K562 (cell line): ENCODE measurements at regions of chr10 and their contacts with region 1.

Region 1: GRCh38 chr10:4849555-4850242 is 23.7 kb downstream of the AKR1E2 start:
- DNase-seq: peak; percentile 80 to 96 (median 82)
- ATAC-seq: peak; percentile 87
- H3K4me3 ChIP-seq: no peak overlapping the region
- H3K27ac ChIP-seq: peak overlapping the region; percentile 96
- H3K4me1 ChIP-seq: peaks cover 14 to 34% of the 10 kb centered on the region in 2 experiments
- H3K27me3 ChIP-seq: no peaks in the 10 kb centered on the region
- CTCF ChIP-seq: peak; percentile 100
- EP300 ChIP-seq: peak; percentile 73; the same call in 1 of the 2 replicates
- POLR2A ChIP-seq: no peak; the same call in none of the 2 replicates
- RAD21 ChIP-seq: peak; percentile 99 to 100

Region 2: GRCh38 chr10:4819707-4820106 is 30.0 kb before region 1 on chr10:
- CTCF ChIA-PET with region 1: interaction called, 10 read pairs
- POLR2A ChIA-PET with region 1: no interaction called
- in situ Hi-C with region 1: no loop called
- intact Hi-C with region 1: loop called (anchors 1 kb)
- DNase-seq: peak in 2 of 4 experiments; percentile 38 to 67
- ATAC-seq: peak; percentile 66
- H3K4me3 ChIP-seq: no peak overlapping the region
- H3K27ac ChIP-seq: no peak overlapping the region; the same call in 2 of the 3 replicates
- H3K4me1 ChIP-seq: peaks cover 0 to 32% of the 10 kb centered on the region in 2 experiments; a peak in 2 of 5 replicates
- H3K27me3 ChIP-seq: no peaks in the 10 kb centered on the region
- CTCF ChIP-seq: no peak
- EP300 ChIP-seq: peak; percentile 50
- POLR2A ChIP-seq: no peak
- RAD21 ChIP-seq: no peak; a peak in 1 of 4 replicates

Region 3: GRCh38 chr10:4839401-4839800 is 10.3 kb before region 1 on chr10:
- CTCF ChIA-PET with region 1: no interaction called
- POLR2A ChIA-PET with region 1: interaction called, 22 read pairs
- in situ Hi-C with region 1: no loop called
- intact Hi-C with region 1: no loop called
- DNase-seq: peak in 2 of 4 experiments; percentile 22 to 39
- ATAC-seq: peak; percentile 92
- H3K4me3 ChIP-seq: no peak overlapping the region
- H3K27ac ChIP-seq: no peak overlapping the region
- H3K4me1 ChIP-seq: peaks cover 0 to 2% of the 10 kb centered on the region in 2 experiments; a peak in 1 of 5 replicates
- H3K27me3 ChIP-seq: no peaks in the 10 kb centered on the region
- CTCF ChIP-seq: peak; percentile 29 to 38 (median 36); a peak in 4 of 6 replicates
- EP300 ChIP-seq: no peak
- POLR2A ChIP-seq: no peak
- RAD21 ChIP-seq: peak in 1 of 2 experiments; percentile 36; a peak in 2 of 4 replicates

Region 4: GRCh38 chr10:4981722-4982471 is 132.2 kb after region 1 on chr10:
- CTCF ChIA-PET with region 1: interaction called, 13 read pairs
- POLR2A ChIA-PET with region 1: interaction called, 3 read pairs
- in situ Hi-C with region 1: loop called (anchors 5 kb)
- intact Hi-C with region 1: loop called (anchors 1 kb)
- DNase-seq: peak; percentile 62 to 93 (median 64)
- ATAC-seq: peak; percentile 89
- H3K4me3 ChIP-seq: no peak overlapping the region
- H3K27ac ChIP-seq: peak overlapping the region; percentile 82
- H3K4me1 ChIP-seq: peaks cover 18 to 20% of the 10 kb centered on the region in 2 experiments; a peak in 4 of 5 replicates
- H3K27me3 ChIP-seq: no peaks in the 10 kb centered on the region
- CTCF ChIP-seq: peak; percentile 78 to 79 (median 78)
- EP300 ChIP-seq: peak; percentile 92
- POLR2A ChIP-seq: peak; percentile 63; the same call in 1 of the 2 replicates
- RAD21 ChIP-seq: peak; percentile 58 to 78

Region 5: GRCh38 chr10:5283305-5284158 is 433.8 kb after region 1 on chr10:
- CTCF ChIA-PET with region 1: interaction called, 12 read pairs
- POLR2A ChIA-PET with region 1: no interaction called
- in situ Hi-C with region 1: loop called (anchors 10 kb)
- intact Hi-C with region 1: loop called (anchors 1 kb)
- DNase-seq: peak; percentile 47 to 81 (median 62)
- ATAC-seq: peak; percentile 95
- H3K4me3 ChIP-seq: no peak overlapping the region
- H3K27ac ChIP-seq: peak overlapping the region; percentile 89
- H3K4me1 ChIP-seq: peaks cover 2 to 17% of the 10 kb centered on the region in 2 experiments; a peak in 4 of 5 replicates
- H3K27me3 ChIP-seq: no peaks in the 10 kb centered on the region
- CTCF ChIP-seq: peak; percentile 79 to 83 (median 80)
- EP300 ChIP-seq: no peak
- POLR2A ChIP-seq: no peak
- RAD21 ChIP-seq: peak; percentile 66 to 84

Region 6: DNA sequence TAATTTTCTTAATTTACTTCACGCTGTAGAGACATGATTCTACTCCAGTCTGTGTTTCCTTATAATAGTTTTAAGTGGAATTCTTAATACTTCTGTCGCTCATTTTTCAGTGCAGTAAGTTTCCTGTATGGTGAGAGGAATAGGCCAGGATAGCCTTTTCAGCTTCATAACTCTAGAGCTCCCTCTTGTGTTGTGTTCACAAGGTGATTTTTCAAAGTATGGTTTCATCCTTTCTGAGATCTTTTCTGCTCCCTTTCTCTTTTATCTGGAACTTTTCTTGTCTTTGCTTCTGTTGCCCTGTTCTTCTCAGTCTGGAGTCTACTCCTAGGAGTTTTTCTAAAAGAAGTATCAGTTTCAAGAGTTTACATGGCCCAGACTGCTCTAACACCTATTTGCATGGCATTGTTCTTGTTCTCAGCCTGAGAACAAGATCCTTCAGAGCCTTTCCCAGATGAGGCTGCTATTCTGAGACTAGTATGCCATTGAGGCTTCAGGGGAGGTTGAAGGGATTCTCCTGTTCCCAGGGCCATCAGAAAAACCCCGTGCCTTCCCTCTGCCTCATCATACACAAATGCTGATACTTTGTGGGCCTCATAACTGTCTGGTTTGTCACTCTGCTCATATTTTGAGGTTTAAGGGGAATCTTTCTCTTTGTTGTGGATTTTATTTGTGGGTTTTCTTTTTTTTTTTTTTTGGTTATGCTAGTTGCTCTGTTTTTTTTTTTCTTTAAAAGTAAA is 584.5 kb after region 1 on chr10:
- CTCF ChIA-PET with region 1: interaction called, 31 read pairs
- POLR2A ChIA-PET with region 1: interaction called, 4 read pairs
- in situ Hi-C with region 1: no loop called
- intact Hi-C with region 1: loop called (anchors 10 kb)
- DNase-seq: peak; percentile 27 to 60 (median 32)
- ATAC-seq: peak; percentile 92
- H3K4me3 ChIP-seq: no peak overlapping the region
- H3K27ac ChIP-seq: peak overlapping the region; percentile 31; the same call in 1 of the 3 replicates
- H3K4me1 ChIP-seq: peaks cover 0 to 7% of the 10 kb centered on the region in 2 experiments; a peak in 2 of 5 replicates
- H3K27me3 ChIP-seq: no peaks in the 10 kb centered on the region
- CTCF ChIP-seq: peak; percentile 51 to 78 (median 69); a peak in 5 of 6 replicates
- EP300 ChIP-seq: no peak
- POLR2A ChIP-seq: no peak
- RAD21 ChIP-seq: peak; percentile 65 to 86